Endothelial cell of umbilical vein (primary cell): ENCODE measurements at regions of chr7 and their contacts with region 1.

Region 1: GRCh38 chr7:22559829-22560489 is 60.0 kb upstream of the STEAP1B start:
- DNase-seq: peak; percentile 85
- H3K4me3 ChIP-seq: no peak overlapping the region
- H3K27ac ChIP-seq: peak overlapping the region; percentile 99
- H3K4me1 ChIP-seq: peaks cover 48% of the 10 kb centered on the region
- H3K27me3 ChIP-seq: peaks cover 0 to under 1% of the 10 kb centered on the region in 2 experiments
- CTCF ChIP-seq: peak; percentile 76 to 87
- POLR2A ChIP-seq: no peak

Region 2: GRCh38 chr7:22542669-22543068 is 17.3 kb before region 1 on chr7:
- CTCF ChIA-PET with region 1: no interaction called
- POLR2A ChIA-PET with region 1: no interaction called
- dilution Hi-C with region 1: no loop called
- intact Hi-C with region 1: no loop called
- DNase-seq: no peak
- H3K4me3 ChIP-seq: no peak overlapping the region
- H3K27ac ChIP-seq: no peak overlapping the region
- H3K4me1 ChIP-seq: no peaks in the 10 kb centered on the region
- H3K27me3 ChIP-seq: peaks cover 12 to 18% of the 10 kb centered on the region in 2 experiments
- CTCF ChIP-seq: no peak
- POLR2A ChIP-seq: no peak

Region 3: GRCh38 chr7:22577396-22578001 is 17.5 kb after region 1 on chr7:
- CTCF ChIA-PET with region 1: interaction called, 67 read pairs
- POLR2A ChIA-PET with region 1: interaction called, 13 read pairs
- dilution Hi-C with region 1: no loop called
- intact Hi-C with region 1: loop called (anchors 1 kb)
- DNase-seq: peak; percentile 94
- H3K4me3 ChIP-seq: peak overlapping the region in 1 of 3 experiments; percentile 34
- H3K27ac ChIP-seq: peak overlapping the region; percentile 99
- H3K4me1 ChIP-seq: peaks cover 47% of the 10 kb centered on the region
- H3K27me3 ChIP-seq: no peaks in the 10 kb centered on the region
- CTCF ChIP-seq: no peak
- POLR2A ChIP-seq: peak; percentile 20

Region 4: DNA sequence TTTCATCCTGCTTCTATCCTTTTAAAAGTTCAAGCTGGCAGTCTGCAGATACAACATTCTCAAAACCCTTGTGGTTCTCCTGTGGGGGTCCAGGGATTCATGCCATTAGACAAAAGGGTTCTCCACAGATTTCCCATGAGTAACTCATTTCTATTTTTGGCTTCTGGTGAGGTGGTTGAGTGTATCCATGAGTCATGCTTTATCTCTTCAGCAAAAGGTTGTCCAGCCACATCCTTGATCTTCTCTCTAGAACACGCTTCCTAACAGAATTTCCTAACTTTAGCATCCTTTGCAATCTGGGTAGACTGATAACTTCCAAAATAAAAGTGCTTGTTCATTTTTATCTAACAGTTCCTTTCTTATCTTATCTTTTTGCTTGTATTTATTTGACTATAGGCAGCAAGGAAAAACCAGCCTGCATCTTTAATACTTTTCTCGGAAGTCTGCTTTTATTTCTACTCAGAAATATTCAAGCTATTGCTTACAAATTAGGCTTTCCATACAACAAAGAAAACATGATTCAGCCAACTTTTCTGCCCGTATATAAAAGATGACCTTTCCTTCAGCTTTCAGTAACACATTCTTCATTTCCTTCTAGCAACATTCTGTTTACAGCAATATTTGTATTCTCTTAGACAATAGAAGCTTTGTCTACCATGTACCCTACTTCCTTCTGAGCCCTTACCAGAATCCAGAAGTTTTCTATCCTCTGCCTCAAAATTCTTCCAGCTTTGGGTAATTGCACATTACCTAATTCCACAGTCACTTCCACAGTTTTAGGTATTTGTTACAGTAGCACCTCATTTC is 87.7 kb after region 1 on chr7:
- CTCF ChIA-PET with region 1: interaction called, 7 read pairs
- POLR2A ChIA-PET with region 1: interaction called, 7 read pairs
- dilution Hi-C with region 1: no loop called
- intact Hi-C with region 1: loop called (anchors 1 kb)
- DNase-seq: peak; percentile 74
- H3K4me3 ChIP-seq: no peak overlapping the region
- H3K27ac ChIP-seq: peak overlapping the region; percentile 93
- H3K4me1 ChIP-seq: peaks cover 49% of the 10 kb centered on the region
- H3K27me3 ChIP-seq: no peaks in the 10 kb centered on the region
- CTCF ChIP-seq: no peak
- POLR2A ChIP-seq: peak; percentile 31

Region 5: DNA sequence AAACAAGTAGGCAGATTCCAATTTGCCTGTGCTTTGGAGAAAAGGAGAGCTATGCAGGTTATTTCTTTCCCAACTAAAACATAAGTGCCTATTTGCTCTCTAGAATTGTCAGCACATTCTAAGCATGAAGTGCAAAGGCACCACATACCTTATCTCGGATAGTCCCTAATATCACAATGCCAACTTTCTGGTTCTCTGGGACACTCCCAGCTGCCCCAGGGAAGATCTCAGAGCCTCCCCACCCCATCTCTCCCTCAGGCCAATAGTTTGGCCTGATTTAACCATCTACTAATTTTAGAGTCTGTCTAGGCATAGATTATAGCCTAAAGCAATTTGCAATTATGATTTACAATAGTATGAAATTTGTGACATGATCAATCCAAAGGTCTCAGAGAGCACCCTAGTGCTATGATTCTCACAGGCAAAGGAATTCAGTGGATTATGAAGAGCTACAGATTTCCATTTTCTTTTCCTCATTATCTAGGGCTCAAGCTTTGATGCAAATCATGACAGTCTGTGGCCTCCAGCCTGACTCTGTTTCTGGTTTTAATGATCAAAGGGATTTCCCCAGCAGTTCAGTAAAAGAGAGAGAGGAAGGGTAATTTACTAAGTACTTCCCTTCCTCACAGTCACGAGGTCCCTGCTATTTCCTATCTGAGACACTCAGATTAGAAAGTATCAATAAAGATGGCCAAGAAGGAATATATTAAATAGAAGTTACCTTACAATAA is 138.1 kb after region 1 on chr7:
- CTCF ChIA-PET with region 1: interaction called, 4 read pairs
- POLR2A ChIA-PET with region 1: interaction called, 16 read pairs
- dilution Hi-C with region 1: no loop called
- intact Hi-C with region 1: no loop called
- DNase-seq: peak; percentile 63
- H3K4me3 ChIP-seq: no peak overlapping the region
- H3K27ac ChIP-seq: no peak overlapping the region
- H3K4me1 ChIP-seq: peaks cover 23% of the 10 kb centered on the region
- H3K27me3 ChIP-seq: no peaks in the 10 kb centered on the region
- CTCF ChIP-seq: no peak
- POLR2A ChIP-seq: no peak

Region 6: DNA sequence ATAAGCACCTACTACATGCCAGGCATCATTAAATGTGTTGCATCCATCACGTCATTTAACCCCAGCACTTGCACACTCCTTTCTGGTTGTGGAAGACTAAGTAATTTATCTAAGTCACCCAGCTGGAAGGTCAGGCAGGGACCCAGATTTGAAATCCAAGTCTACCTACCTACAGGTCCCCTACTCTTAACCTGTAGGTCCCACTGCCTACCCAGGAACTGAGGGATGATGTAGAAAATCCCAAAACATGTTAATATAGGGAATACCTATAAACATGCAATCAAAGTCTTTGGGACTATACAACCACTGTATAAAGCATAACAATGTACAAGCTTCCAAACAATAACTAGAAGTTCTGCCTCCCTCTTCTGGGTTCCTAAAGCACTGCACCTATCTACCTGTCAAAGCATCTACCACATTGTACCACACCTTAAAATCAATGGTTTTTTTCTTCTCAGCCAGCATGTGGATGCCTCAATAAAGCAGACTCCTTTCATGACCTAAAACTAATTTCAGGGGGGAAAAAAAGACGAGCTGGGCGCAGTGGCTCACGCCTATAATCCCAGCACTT is 172.7 kb after region 1 on chr7:
- CTCF ChIA-PET with region 1: interaction called, 450 read pairs
- POLR2A ChIA-PET with region 1: interaction called, 50 read pairs
- dilution Hi-C with region 1: loop called (anchors 25 kb)
- intact Hi-C with region 1: no loop called
- DNase-seq: peak; percentile 45
- H3K4me3 ChIP-seq: no peak overlapping the region
- H3K27ac ChIP-seq: no peak overlapping the region
- H3K4me1 ChIP-seq: peaks cover 25% of the 10 kb centered on the region
- H3K27me3 ChIP-seq: no peaks in the 10 kb centered on the region
- CTCF ChIP-seq: peak; percentile 24 to 42
- POLR2A ChIP-seq: peak; percentile 38

Region 7: GRCh38 chr7:22854158-22855048 is 294.4 kb after region 1 on chr7:
- CTCF ChIA-PET with region 1: interaction called, 4 read pairs
- POLR2A ChIA-PET with region 1: interaction called, 3 read pairs
- dilution Hi-C with region 1: no loop called
- intact Hi-C with region 1: loop called (anchors 1 kb)
- DNase-seq: peak; percentile 72
- H3K4me3 ChIP-seq: peak overlapping the region; percentile 76 to 88 (median 86)
- H3K27ac ChIP-seq: peak overlapping the region; percentile 74
- H3K4me1 ChIP-seq: peaks cover 36% of the 10 kb centered on the region
- H3K27me3 ChIP-seq: no peaks in the 10 kb centered on the region
- CTCF ChIP-seq: peak; percentile 41 to 58
- POLR2A ChIP-seq: peak; percentile 84

Region 8: DNA sequence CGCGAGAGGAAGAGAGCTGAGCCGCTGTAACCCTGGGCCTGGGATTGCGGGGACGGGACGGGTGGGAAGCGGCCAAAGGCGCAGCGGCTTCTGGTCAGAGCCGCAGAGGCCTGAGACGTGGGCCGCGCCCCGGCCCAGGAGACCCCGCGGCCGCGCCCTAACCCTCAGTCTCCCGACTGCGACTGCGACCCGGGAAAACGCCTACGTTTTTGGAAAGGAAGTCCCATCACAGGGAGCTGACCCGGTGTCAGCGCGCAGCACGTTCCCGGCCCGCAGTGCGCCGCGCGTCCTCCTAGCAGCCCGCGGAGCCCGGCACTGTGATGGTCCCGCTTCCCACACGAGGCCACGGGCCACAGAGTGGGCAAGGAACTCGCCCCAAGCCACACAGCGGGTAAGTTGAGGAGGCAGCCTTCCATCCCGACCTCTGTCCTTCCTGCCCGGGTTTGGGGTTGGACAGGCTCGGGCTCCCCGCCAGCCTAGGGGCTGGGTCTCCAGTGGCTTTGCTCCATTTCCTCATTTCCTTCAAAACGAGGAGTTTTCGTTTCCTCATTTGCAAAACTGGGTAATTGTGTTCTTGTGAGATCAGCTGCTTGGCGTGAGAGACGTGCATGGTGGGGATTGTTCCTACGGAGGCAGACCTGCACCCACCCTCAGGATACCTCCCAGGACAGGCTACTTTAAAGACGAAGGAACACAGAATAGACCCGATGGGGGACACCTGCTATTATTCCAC is 687.8 kb after region 1 on chr7:
- CTCF ChIA-PET with region 1: no interaction called
- POLR2A ChIA-PET with region 1: no interaction called
- dilution Hi-C with region 1: no loop called
- intact Hi-C with region 1: no loop called
- DNase-seq: no peak
- H3K4me3 ChIP-seq: peak overlapping the region in 2 of 3 experiments; percentile 8 to 37
- H3K27ac ChIP-seq: no peak overlapping the region
- H3K4me1 ChIP-seq: peaks cover 4% of the 10 kb centered on the region
- H3K27me3 ChIP-seq: peaks cover 31 to 38% of the 10 kb centered on the region in 2 experiments
- CTCF ChIP-seq: no peak
- POLR2A ChIP-seq: no peak

Region 9: GRCh38 chr7:23597094-23598091 is 1037.4 kb after region 1 on chr7 and contains the start of gene CCDC126:
- CTCF ChIA-PET with region 1: no interaction called
- POLR2A ChIA-PET with region 1: interaction called, 10 read pairs
- dilution Hi-C with region 1: no loop called
- intact Hi-C with region 1: no loop called
- DNase-seq: peak; percentile 93
- H3K4me3 ChIP-seq: peak within 1 kb of the TSS; percentile 67 to 94 (median 70)
- H3K27ac ChIP-seq: peak within 1 kb of the TSS; percentile 73
- H3K4me1 ChIP-seq: peaks cover 12% of the 10 kb centered on the region
- H3K27me3 ChIP-seq: peaks cover 0 to 5% of the 10 kb centered on the region in 2 experiments
- CTCF ChIP-seq: no peak
- POLR2A ChIP-seq: peak; percentile 16
- total RNA-seq, gene CCDC126: 7.1 and 8.6 TPM in 2 replicates